Endothelial cell of umbilical vein (primary cell): ENCODE measurements at regions of chr6 and their contacts with region 1.

Region 1: DNA sequence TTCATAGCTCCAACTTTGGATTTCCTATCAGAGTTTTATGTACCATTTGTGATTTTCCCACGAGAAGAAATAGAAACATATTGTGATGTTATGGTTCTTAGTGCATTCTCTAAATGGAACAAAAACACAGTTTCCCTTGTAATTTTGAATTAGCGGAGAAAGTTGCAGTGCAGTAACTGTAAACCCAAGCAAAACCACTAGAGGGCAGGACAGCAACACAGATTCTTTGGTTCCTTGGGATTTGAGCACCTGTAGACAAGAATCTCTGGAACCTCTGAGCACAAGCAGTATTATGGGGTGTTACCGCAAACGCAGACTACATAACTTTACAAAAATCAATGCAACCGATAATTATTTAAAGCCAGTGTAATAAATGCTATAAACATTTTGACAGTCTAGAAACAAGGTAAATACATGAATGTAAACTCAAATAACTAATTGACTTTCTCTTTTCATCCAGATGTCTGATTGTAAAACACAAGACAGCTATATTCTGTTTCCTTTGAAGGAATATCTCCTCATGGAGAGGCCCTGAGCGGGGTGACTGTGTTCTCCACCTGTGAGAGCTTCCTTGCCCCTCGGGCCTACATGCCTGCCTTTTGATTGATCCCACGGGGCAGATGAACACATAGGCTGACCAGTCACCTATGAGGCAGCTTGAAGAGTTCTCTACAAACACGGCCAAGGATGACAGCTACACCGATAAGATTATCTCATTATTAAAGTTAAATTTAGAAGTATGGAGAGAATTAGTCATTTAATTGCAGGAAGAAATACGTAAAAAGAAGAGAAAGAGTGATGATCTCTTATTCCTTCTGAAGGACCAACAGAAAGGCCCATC is 67.5 kb upstream of the COL21A1 start:
- DNase-seq: peak; percentile 72
- H3K4me3 ChIP-seq: no peak overlapping the region
- H3K27ac ChIP-seq: no peak overlapping the region
- H3K4me1 ChIP-seq: no peaks in the 10 kb centered on the region
- H3K27me3 ChIP-seq: no peaks in the 10 kb centered on the region
- CTCF ChIP-seq: peak; percentile 62 to 67
- POLR2A ChIP-seq: no peak

Region 2: GRCh38 chr6:55047451-55048044 is 1267.4 kb before region 1 on chr6:
- CTCF ChIA-PET with region 1: no interaction called
- POLR2A ChIA-PET with region 1: no interaction called
- dilution Hi-C with region 1: no loop called
- intact Hi-C with region 1: no loop called
- DNase-seq: no peak
- H3K4me3 ChIP-seq: no peak overlapping the region
- H3K27ac ChIP-seq: no peak overlapping the region
- H3K4me1 ChIP-seq: no peaks in the 10 kb centered on the region
- H3K27me3 ChIP-seq: no peaks in the 10 kb centered on the region
- CTCF ChIP-seq: no peak
- POLR2A ChIP-seq: no peak

Region 3: GRCh38 chr6:56268266-56268665 is 46.6 kb before region 1 on chr6:
- CTCF ChIA-PET with region 1: no interaction called
- POLR2A ChIA-PET with region 1: no interaction called
- dilution Hi-C with region 1: no loop called
- intact Hi-C with region 1: no loop called
- DNase-seq: no peak
- H3K4me3 ChIP-seq: no peak overlapping the region
- H3K27ac ChIP-seq: no peak overlapping the region
- H3K4me1 ChIP-seq: no peaks in the 10 kb centered on the region
- H3K27me3 ChIP-seq: no peaks in the 10 kb centered on the region
- CTCF ChIP-seq: no peak
- POLR2A ChIP-seq: no peak

Region 4: DNA sequence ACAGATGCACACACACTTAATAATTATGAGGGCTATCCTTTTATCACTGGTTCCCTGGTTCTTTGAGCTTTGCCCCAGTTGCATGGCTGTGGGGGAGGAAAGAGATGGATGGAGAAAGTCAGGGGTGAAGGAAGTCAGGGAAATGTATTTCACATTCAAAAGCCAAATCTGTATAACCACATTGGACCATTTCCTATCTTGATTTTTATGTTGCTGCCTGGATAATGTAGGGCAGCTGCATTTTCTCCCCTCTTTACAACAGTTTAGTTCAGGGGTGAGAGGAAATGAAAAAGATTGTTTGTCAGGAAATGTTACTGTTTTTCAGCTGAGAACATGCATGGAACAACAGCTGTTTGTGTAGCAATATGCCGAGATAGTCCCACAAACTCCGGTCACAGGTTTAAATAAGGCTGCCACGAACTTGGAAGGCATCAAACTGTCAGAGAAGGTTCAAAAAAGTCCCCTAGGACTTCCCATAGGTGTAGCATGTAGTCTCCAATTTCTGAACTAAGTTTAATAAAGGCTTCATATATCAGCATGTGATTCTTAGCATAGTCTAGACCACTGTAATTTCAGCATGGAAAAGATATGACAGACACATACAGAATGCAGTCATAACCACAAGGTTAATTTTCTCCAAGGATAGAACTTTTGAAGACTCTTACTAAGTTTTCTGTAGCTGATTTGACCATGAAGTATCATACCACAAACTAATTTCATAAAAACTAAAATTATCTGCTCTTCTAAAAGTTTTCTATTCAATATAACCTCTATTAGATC is 14.6 kb after region 1 on chr6:
- CTCF ChIA-PET with region 1: interaction called, 18 read pairs
- POLR2A ChIA-PET with region 1: no interaction called
- dilution Hi-C with region 1: no loop called
- intact Hi-C with region 1: no loop called
- DNase-seq: peak; percentile 97
- H3K4me3 ChIP-seq: peak overlapping the region in 1 of 3 experiments; percentile 41
- H3K27ac ChIP-seq: peak overlapping the region; percentile 60
- H3K4me1 ChIP-seq: peaks cover 21% of the 10 kb centered on the region
- H3K27me3 ChIP-seq: no peaks in the 10 kb centered on the region
- CTCF ChIP-seq: no peak
- POLR2A ChIP-seq: peak; percentile 49

Region 5: GRCh38 chr6:56359201-56359899 is 44.4 kb after region 1 on chr6:
- CTCF ChIA-PET with region 1: interaction called, 27 read pairs
- POLR2A ChIA-PET with region 1: no interaction called
- dilution Hi-C with region 1: no loop called
- intact Hi-C with region 1: loop called (anchors 1 kb)
- DNase-seq: peak; percentile 83
- H3K4me3 ChIP-seq: no peak overlapping the region
- H3K27ac ChIP-seq: no peak overlapping the region
- H3K4me1 ChIP-seq: peaks cover 47% of the 10 kb centered on the region
- H3K27me3 ChIP-seq: no peaks in the 10 kb centered on the region
- CTCF ChIP-seq: peak; percentile 55 to 59
- POLR2A ChIP-seq: no peak

Region 6: GRCh38 chr6:56549014-56549413 is 234.1 kb after region 1 on chr6:
- CTCF ChIA-PET with region 1: interaction called, 10 read pairs
- POLR2A ChIA-PET with region 1: no interaction called
- dilution Hi-C with region 1: no loop called
- intact Hi-C with region 1: no loop called
- DNase-seq: peak; percentile 64
- H3K4me3 ChIP-seq: no peak overlapping the region
- H3K27ac ChIP-seq: no peak overlapping the region
- H3K4me1 ChIP-seq: no peaks in the 10 kb centered on the region
- H3K27me3 ChIP-seq: no peaks in the 10 kb centered on the region
- CTCF ChIP-seq: peak in 1 of 2 donors; percentile 32
- POLR2A ChIP-seq: no peak